Right ventricle myocardium inferior (tissue), 1 donor: ENCODE measurements at regions of chr6 and their contacts with region 1.

Region 1: GRCh38 chr6:150417899-150418826 is 49.4 kb downstream of the IYD start:
- DNase-seq: no peak
- ATAC-seq: peak; percentile 81

Region 2: DNA sequence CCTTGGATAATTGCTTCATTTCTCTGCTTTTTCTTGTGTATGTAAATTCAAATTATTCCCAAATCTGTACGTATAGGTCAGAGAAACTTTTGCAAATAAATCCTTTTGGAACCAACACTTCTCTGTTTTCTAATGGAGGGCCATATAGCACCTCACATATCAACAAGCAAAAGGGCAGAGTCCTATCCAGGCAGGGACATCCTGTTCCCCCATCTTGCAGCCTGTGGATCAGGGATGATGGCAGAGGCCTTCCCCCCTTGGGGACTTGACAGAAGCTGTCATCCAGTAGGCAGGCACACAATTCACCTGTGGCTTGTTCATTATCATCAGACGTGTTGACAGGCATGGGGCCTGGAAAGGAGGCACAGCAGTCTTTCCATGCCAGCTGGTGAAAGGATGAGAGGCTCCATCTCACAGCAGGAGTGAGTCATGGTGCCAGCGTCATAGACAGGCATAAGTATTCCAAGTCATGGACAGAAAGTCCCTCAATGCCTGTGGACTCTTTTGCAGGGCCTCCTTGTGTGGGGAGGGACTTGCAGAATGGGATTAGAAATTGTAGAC is 149.7 kb after region 1 on chr6:
- intact Hi-C with region 1: loop called (anchors 10 kb)
- DNase-seq: no peak
- ATAC-seq: peak; percentile 93

Region 3: GRCh38 chr6:150600301-150601017 is 182.3 kb after region 1 on chr6:
- intact Hi-C with region 1: loop called (anchors 2 kb)
- DNase-seq: peak; percentile 74
- ATAC-seq: peak; percentile 51

Region 4: GRCh38 chr6:150667977-150668716 is 250.0 kb after region 1 on chr6:
- intact Hi-C with region 1: loop called (anchors 5 kb)
- DNase-seq: peak; percentile 89
- ATAC-seq: peak; percentile 93

Region 5: GRCh38 chr6:150685860-150686259 is 267.7 kb after region 1 on chr6:
- intact Hi-C with region 1: loop called (anchors 5 kb)
- DNase-seq: no peak
- ATAC-seq: no peak

Region 6: DNA sequence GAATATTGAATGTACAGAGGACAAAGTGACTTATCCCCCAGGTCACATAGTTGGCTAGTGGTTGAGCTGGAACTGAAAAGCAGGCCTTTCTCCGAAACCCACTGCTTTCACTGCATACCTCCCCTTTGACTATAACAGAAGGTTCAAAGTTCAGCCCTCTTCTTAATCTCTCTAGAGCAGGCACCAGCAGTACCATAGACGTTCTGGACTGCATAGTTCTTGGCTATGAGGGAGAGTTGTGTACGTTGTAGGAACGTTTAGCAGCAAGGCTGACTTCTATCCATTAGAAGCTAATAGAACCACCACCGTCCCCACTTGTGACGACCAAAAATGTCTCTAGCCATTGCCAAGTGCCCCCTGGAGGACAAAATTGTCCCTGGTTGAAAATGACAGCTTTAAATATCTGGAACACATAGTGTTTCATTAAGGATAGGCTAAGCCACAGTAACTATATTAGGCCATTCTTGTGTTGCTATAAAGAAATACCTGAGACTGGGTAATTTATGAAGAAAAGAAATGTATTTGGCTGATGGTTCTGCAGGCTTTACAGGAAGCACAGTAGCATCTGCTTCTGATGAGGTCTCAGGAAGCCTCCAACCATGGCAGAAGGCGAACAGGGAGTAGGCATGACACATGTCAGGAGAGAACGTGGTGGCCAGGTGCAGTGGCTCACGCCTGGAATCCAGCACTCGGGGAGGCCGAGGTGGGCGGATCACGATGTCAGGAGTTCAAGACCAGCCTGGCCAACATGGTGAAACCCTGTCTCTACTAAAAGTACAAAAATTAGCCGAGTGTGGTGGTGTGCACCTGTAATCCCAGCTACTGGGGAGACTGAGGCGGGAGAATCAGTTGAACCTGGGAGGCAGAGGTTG is 323.7 kb after region 1 on chr6:
- intact Hi-C with region 1: loop called (anchors 2 kb)
- DNase-seq: no peak
- ATAC-seq: no peak

Region 7: DNA sequence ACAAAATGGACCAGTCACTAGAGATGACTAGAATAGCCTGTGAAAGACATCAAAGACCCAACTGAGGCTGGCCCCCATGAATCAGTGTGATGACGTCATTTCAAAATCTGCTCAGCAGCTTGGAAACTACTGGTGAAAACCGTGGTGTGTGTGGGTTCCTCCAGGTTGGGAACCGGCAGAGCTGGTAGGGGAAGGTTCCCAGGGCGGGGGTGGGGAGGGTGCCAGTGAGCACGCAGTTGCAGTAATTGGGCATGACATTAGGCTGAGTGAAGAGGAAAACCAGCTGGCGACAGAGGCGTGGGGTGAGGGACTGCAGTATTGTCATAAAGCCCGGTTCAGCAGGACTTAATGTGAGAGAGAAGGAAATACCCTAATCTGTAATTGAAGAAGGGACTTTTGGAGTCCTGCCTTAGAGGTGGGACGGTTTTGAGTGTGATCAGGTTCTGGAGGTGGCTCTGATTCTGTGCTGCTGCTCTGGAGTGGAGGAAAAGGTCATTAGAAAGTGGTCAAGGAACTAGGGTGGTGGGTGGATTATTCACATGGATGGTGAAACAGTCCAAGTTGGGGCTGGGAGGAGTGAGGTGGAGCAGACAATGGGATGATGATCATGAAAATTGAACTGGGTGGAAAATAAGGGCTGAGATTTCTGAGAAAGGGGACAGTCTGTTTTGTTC is 395.3 kb after region 1 on chr6:
- intact Hi-C with region 1: loop called (anchors 1 kb)
- DNase-seq: no peak
- ATAC-seq: peak; percentile 21

Region 8: GRCh38 chr6:151067684-151068596 is 649.8 kb after region 1 on chr6:
- intact Hi-C with region 1: no loop called
- DNase-seq: peak; percentile 78
- ATAC-seq: peak; percentile 57